Endothelial cell of umbilical vein (primary cell): ENCODE measurements at regions of chr3 and their contacts with region 1.

Region 1: DNA sequence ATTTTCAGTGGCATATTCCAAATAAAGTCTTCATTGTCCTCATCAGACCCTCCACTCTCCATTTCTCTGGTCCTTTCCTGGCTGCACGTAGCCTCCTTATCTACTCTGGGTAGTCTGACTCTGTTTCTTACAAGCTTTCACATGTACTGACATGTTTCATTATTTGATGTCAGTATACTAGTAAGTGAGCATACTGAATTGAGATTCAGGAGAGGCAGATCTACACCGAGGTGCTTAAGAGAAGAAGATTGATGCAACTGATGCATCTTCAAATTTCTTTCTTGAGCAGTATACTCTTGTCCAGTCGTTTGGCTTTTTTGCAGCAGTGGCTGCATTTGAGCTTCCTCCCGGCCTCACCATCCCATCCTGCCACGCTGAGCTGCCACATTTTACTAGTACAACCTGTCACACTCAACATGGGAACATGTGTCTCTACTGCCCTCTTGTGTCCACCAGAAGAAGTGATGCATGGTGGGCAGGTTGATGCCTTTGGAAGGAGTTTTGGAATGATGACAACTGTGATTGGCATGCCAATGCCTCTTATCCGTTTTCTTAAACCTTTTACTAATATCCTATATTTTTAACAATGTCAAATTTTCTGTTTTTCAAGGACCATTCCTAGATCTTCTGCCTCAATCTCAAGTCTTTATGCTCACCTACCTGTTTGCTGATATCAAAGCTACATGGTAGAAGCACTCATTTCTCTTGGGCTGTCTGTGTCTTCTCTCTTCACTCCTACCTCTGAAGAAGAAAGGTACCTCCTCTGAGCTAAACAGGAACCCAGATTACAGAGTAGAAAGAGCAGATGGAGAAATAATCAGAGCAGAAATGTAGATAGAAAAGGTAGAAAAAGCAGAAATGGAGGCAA is 38.7 kb downstream of the GUCA1C start:
- DNase-seq: peak; percentile 69
- H3K4me3 ChIP-seq: no peak overlapping the region
- H3K27ac ChIP-seq: no peak overlapping the region
- H3K4me1 ChIP-seq: no peaks in the 10 kb centered on the region
- H3K27me3 ChIP-seq: no peaks in the 10 kb centered on the region
- CTCF ChIP-seq: peak; percentile 78 to 84
- POLR2A ChIP-seq: no peak

Region 2: GRCh38 chr3:108489771-108490170 is 425.2 kb before region 1 on chr3:
- CTCF ChIA-PET with region 1: interaction called, 18 read pairs
- POLR2A ChIA-PET with region 1: no interaction called
- dilution Hi-C with region 1: no loop called
- intact Hi-C with region 1: loop called (anchors 1 kb)
- DNase-seq: peak; percentile 75
- H3K4me3 ChIP-seq: no peak overlapping the region
- H3K27ac ChIP-seq: no peak overlapping the region
- H3K4me1 ChIP-seq: peaks cover 12% of the 10 kb centered on the region
- H3K27me3 ChIP-seq: no peaks in the 10 kb centered on the region
- CTCF ChIP-seq: peak; percentile 51 to 57
- POLR2A ChIP-seq: no peak

Region 3: GRCh38 chr3:108669208-108669607 is 245.8 kb before region 1 on chr3:
- CTCF ChIA-PET with region 1: interaction called, 151 read pairs
- POLR2A ChIA-PET with region 1: no interaction called
- dilution Hi-C with region 1: no loop called
- intact Hi-C with region 1: no loop called
- DNase-seq: no peak
- H3K4me3 ChIP-seq: no peak overlapping the region
- H3K27ac ChIP-seq: no peak overlapping the region
- H3K4me1 ChIP-seq: no peaks in the 10 kb centered on the region
- H3K27me3 ChIP-seq: no peaks in the 10 kb centered on the region
- CTCF ChIP-seq: no peak
- POLR2A ChIP-seq: no peak

Region 4: DNA sequence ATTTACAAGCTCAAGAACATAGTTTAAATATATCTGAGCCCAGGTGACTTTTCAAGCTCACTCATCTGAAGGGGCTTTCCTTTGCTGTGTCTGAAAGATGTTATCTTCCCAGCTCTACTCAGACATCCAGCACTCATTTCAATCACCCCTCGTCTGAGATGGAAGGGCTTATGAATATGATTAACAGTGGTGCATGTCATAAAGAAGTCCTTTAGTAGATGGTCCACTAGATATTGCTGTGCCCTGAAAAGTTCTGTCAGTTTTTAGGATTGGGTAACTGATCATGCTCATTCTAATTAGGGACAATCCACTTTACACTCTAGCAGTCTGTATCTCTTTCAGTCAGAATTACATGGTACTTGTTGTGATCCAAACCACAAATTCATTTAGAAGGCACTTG is 186.1 kb before region 1 on chr3:
- CTCF ChIA-PET with region 1: no interaction called
- POLR2A ChIA-PET with region 1: no interaction called
- dilution Hi-C with region 1: no loop called
- intact Hi-C with region 1: no loop called
- DNase-seq: no peak
- H3K4me3 ChIP-seq: no peak overlapping the region
- H3K27ac ChIP-seq: no peak overlapping the region
- H3K4me1 ChIP-seq: no peaks in the 10 kb centered on the region
- H3K27me3 ChIP-seq: no peaks in the 10 kb centered on the region
- CTCF ChIP-seq: no peak
- POLR2A ChIP-seq: no peak

Region 5: GRCh38 chr3:108883373-108883772 is 31.6 kb before region 1 on chr3:
- CTCF ChIA-PET with region 1: no interaction called
- POLR2A ChIA-PET with region 1: no interaction called
- dilution Hi-C with region 1: no loop called
- intact Hi-C with region 1: no loop called
- DNase-seq: no peak
- H3K4me3 ChIP-seq: no peak overlapping the region
- H3K27ac ChIP-seq: no peak overlapping the region
- H3K4me1 ChIP-seq: no peaks in the 10 kb centered on the region
- H3K27me3 ChIP-seq: no peaks in the 10 kb centered on the region
- CTCF ChIP-seq: no peak
- POLR2A ChIP-seq: no peak